ENCODE measurements at regions of chr5 and their contacts with region 1.

Region 1: GRCh38 chr5:164013077-164013670 is 507.8 kb downstream of the MAT2B start:
- DNase-seq: no peak
- H3K4me3 ChIP-seq: no peak overlapping the region
- H3K27ac ChIP-seq: no peak overlapping the region
- H3K4me1 ChIP-seq: no peaks in the 10 kb centered on the region
- H3K27me3 ChIP-seq: peaks cover 9% of the 10 kb centered on the region
- CTCF ChIP-seq: peak; percentile 73

Region 2: GRCh38 chr5:164504141-164504772 is 491.1 kb after region 1 on chr5:
- intact Hi-C with region 1: loop called (anchors 5 kb)
- DNase-seq: no peak
- H3K4me3 ChIP-seq: no peak overlapping the region
- H3K27ac ChIP-seq: no peak overlapping the region
- H3K4me1 ChIP-seq: no peaks in the 10 kb centered on the region
- H3K27me3 ChIP-seq: no peaks in the 10 kb centered on the region
- CTCF ChIP-seq: peak; percentile 82

Measured in left ventricle myocardium inferior (tissue), 1 donor.